ENCODE measurements at regions of chr1 and their contacts with region 1.

Region 1: GRCh38 chr1:108691942-108692723 is at the start of gene PRPF38B:
- DNase-seq: peak; percentile 85 to 97 (median 94)
- ATAC-seq: peak; percentile 78
- H3K4me3 ChIP-seq: peak within 1 kb of the TSS; percentile 78 to 87
- H3K4me3 Mint-ChIP-seq: peak within 1 kb of the TSS; percentile 97
- H3K27ac ChIP-seq: peak within 1 kb of the TSS; percentile 92 to 97
- H3K27ac Mint-ChIP-seq: peak within 1 kb of the TSS; percentile 100
- H3K4me1 ChIP-seq: peaks cover 36% of the 10 kb centered on the region
- H3K4me1 Mint-ChIP-seq: peaks cover 47% of the 10 kb centered on the region
- H3K27me3 ChIP-seq: no peaks in the 10 kb centered on the region
- H3K27me3 Mint-ChIP-seq: no peaks in the 10 kb centered on the region
- CTCF ChIP-seq: no peak
- total RNA-seq, gene PRPF38B: 108 to 116 TPM

Region 2: DNA sequence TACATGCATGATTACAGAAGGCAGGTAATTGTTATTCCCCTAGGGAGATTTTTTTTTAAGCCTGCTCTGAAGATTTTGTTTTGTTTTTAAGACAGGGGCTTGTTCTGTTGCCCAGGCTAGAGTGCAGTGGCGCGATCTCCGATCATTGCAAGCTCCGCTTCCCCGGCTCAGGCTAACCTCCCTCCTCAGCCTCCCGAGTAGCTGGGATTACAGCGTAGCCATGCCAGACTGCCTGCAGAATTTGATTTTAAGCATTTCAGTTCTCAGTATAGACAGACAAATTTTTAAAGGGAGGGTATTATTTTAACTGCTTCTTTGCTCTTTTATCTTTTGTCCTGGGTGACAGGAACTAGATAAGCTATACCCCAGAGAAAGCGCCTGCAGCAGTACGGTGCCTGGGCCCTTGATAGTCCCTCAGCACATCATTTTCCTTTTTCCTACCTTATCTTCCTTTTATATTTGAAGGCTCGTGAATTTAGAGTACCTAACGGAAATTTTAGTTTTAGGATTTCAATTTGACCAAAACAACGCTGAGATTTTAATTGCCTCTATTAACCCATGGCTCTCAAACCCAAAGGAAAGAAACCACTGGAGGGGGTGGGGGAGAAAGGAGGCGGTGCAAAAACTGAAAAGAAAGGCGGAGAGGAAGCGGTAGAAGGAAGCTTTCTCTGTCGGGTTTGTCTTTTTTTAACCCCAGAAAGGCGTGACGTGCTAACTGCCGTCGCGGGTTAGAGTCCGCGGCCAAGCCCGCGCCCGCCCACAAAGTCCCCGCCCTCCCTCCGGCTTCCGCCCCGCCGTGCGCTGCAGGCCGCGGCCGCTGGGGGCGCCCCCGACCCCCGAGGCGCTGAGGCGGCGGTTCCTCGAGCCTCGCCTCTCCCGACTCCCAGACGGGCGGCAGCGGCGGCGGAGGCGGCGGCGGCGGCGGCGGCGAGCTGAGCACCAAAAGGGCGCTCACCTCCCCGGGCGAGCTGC is 132.6 kb before region 1 on chr1 and contains the start of gene EEIG2:
- CTCF ChIA-PET with region 1: interaction called, 7 read pairs
- POLR2A ChIA-PET with region 1: interaction called, 36 read pairs
- intact Hi-C with region 1: loop called (anchors 1 to 2 kb)
- DNase-seq: peak; percentile 86 to 95 (median 89)
- ATAC-seq: peak; percentile 92
- H3K4me3 ChIP-seq: peak within 1 kb of the TSS; percentile 56 to 72
- H3K4me3 Mint-ChIP-seq: peak within 1 kb of the TSS; percentile 94
- H3K27ac ChIP-seq: peak within 1 kb of the TSS; percentile 41 to 69
- H3K27ac Mint-ChIP-seq: peak within 1 kb of the TSS; percentile 93
- H3K4me1 ChIP-seq: peaks cover 27% of the 10 kb centered on the region
- H3K4me1 Mint-ChIP-seq: peaks cover 45% of the 10 kb centered on the region
- H3K27me3 ChIP-seq: no peaks in the 10 kb centered on the region
- H3K27me3 Mint-ChIP-seq: no peaks in the 10 kb centered on the region
- CTCF ChIP-seq: peak; percentile 69
- total RNA-seq, gene EEIG2: 11.0 to 11.5 TPM

Region 3: GRCh38 chr1:108708691-108709660 is 16.8 kb after region 1 on chr1:
- CTCF ChIA-PET with region 1: interaction called, 41 read pairs
- POLR2A ChIA-PET with region 1: interaction called, 75 read pairs
- intact Hi-C with region 1: loop called (anchors 1 to 2 kb)
- DNase-seq: peak; percentile 44 to 83 (median 71)
- ATAC-seq: peak; percentile 83
- H3K4me3 ChIP-seq: no peak overlapping the region
- H3K4me3 Mint-ChIP-seq: no peak overlapping the region
- H3K27ac ChIP-seq: no peak overlapping the region
- H3K27ac Mint-ChIP-seq: no peak overlapping the region
- H3K4me1 ChIP-seq: peaks cover 16% of the 10 kb centered on the region
- H3K4me1 Mint-ChIP-seq: peaks cover 30% of the 10 kb centered on the region
- H3K27me3 ChIP-seq: no peaks in the 10 kb centered on the region
- H3K27me3 Mint-ChIP-seq: no peaks in the 10 kb centered on the region
- CTCF ChIP-seq: peak; percentile 57

Region 4: GRCh38 chr1:108877348-108878159 is 185.4 kb after region 1 on chr1:
- CTCF ChIA-PET with region 1: interaction called, 3 read pairs
- POLR2A ChIA-PET with region 1: no interaction called
- intact Hi-C with region 1: loop called (anchors 2 to 5 kb)
- DNase-seq: peak in 2 of 9 experiments; percentile 14 to 19
- ATAC-seq: no peak
- H3K4me3 ChIP-seq: peak overlapping the region; percentile 69 to 80
- H3K4me3 Mint-ChIP-seq: peak overlapping the region; percentile 95
- H3K27ac ChIP-seq: peak overlapping the region; percentile 18 to 24
- H3K27ac Mint-ChIP-seq: peak overlapping the region; percentile 46
- H3K4me1 ChIP-seq: peaks cover 6% of the 10 kb centered on the region
- H3K4me1 Mint-ChIP-seq: peaks cover 12% of the 10 kb centered on the region
- H3K27me3 ChIP-seq: peaks cover 0 to under 1% of the 10 kb centered on the region in 2 experiments
- H3K27me3 Mint-ChIP-seq: peaks cover 4% of the 10 kb centered on the region
- CTCF ChIP-seq: no peak

Region 5: DNA sequence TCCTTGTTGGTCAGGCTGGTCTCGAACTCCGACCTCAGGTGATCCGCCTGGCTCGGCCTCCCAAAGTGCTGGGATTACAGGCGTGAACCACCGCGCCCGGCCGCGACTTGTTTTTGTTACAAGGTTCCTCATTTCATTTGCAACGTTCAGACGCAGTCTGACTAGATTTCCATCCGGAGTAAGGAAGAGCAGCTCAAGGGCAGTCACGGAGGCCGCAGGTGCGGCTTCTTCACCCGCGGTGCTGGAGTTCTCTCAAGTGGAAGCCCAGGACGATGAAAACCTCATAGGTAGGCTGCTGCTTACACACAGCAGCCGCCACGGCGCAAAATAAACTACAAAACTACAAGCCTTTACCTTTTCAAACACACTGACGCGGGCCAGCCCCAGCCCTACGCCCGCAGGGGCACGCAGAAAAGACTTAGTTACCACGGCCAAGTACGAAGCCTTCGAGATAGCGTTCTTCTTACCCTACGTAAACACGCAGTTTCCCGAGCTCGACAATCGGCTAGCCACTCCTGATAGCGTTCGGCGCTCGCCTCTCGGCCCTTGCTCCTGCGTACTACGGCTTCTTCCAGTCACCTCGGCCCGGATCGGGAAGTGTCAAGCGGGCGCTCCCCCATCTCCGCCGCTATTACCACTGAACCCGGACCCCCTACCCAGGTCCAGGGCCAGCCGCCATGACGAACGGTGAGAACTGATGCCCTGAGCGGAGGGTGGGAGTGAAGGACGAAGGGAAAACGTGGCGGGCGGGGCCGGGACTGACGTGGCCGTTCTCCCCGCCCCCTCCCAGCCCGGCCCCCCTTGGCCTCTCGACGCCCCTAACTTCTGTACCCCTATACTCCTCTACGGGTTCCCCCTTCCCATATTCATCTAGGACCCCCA is 398.3 kb after region 1 on chr1 and contains the start of gene TMEM167B:
- CTCF ChIA-PET with region 1: no interaction called
- POLR2A ChIA-PET with region 1: no interaction called
- intact Hi-C with region 1: loop called in 1 of 2 experiments (anchors 5 kb)
- DNase-seq: peak; percentile 76 to 94 (median 88)
- ATAC-seq: peak; percentile 94
- H3K4me3 ChIP-seq: peak within 1 kb of the TSS; percentile 84 to 96
- H3K4me3 Mint-ChIP-seq: peak within 1 kb of the TSS; percentile 96
- H3K27ac ChIP-seq: peak within 1 kb of the TSS; percentile 82 to 98
- H3K27ac Mint-ChIP-seq: peak within 1 kb of the TSS; percentile 95
- H3K4me1 ChIP-seq: peaks cover 20% of the 10 kb centered on the region
- H3K4me1 Mint-ChIP-seq: peaks cover 33% of the 10 kb centered on the region
- H3K27me3 ChIP-seq: no peaks in the 10 kb centered on the region
- H3K27me3 Mint-ChIP-seq: no peaks in the 10 kb centered on the region
- CTCF ChIP-seq: no peak
- total RNA-seq, gene TMEM167B: 66.3 to 68.0 TPM

Region 6: GRCh38 chr1:109213785-109214468 is 521.8 kb after region 1 on chr1 and contains the start of gene SARS1:
- CTCF ChIA-PET with region 1: no interaction called
- POLR2A ChIA-PET with region 1: interaction called, 3 read pairs
- intact Hi-C with region 1: loop called in 1 of 2 experiments (anchors 2 kb)
- DNase-seq: peak; percentile 67 to 94 (median 85)
- ATAC-seq: peak; percentile 86
- H3K4me3 ChIP-seq: peak within 1 kb of the TSS; percentile 96 to 100
- H3K4me3 Mint-ChIP-seq: peak within 1 kb of the TSS; percentile 100
- H3K27ac ChIP-seq: peak within 1 kb of the TSS; percentile 79
- H3K27ac Mint-ChIP-seq: peak within 1 kb of the TSS; percentile 95
- H3K4me1 ChIP-seq: peaks cover 27% of the 10 kb centered on the region
- H3K4me1 Mint-ChIP-seq: peaks cover 44% of the 10 kb centered on the region
- H3K27me3 ChIP-seq: no peaks in the 10 kb centered on the region
- H3K27me3 Mint-ChIP-seq: peaks cover 2% of the 10 kb centered on the region
- CTCF ChIP-seq: no peak
- total RNA-seq, gene SARS1: 113 to 118 TPM

Region 7: GRCh38 chr1:110021285-110021684 is 1329.2 kb after region 1 on chr1:
- CTCF ChIA-PET with region 1: no interaction called
- POLR2A ChIA-PET with region 1: no interaction called
- intact Hi-C with region 1: no loop called
- DNase-seq: no peak
- ATAC-seq: no peak
- H3K4me3 ChIP-seq: no peak overlapping the region
- H3K4me3 Mint-ChIP-seq: no peak overlapping the region
- H3K27ac ChIP-seq: no peak overlapping the region
- H3K27ac Mint-ChIP-seq: no peak overlapping the region
- H3K4me1 ChIP-seq: no peaks in the 10 kb centered on the region
- H3K4me1 Mint-ChIP-seq: no peaks in the 10 kb centered on the region
- H3K27me3 ChIP-seq: no peaks in the 10 kb centered on the region
- H3K27me3 Mint-ChIP-seq: no peaks in the 10 kb centered on the region
- CTCF ChIP-seq: no peak

Measured in CD8-positive, alpha-beta T cell (primary cell).